ENCODE measurements at regions of chr3 and their contacts with region 1.

Region 1: DNA sequence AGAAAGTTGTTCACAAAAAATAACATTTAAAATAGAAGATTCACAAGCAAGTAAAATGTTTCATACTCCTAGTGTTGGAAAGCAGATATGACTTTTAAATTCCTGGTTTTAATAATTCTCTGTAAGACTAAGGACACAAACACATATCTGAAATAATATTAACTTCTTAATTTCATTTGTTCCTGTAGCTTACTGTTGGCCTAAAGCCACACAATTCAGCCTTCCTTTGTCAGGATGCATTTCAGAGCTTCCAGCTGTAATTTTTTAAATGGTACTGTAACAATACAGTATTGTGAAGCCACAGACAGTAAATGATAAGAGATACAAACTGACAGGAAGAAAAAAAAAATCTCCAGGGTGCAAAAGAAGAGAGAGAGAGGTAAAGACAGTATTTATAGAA is 84.2 kb downstream of the TMCC1 start:
- DNase-seq: no peak
- H3K4me3 ChIP-seq: no peak overlapping the region
- H3K27ac ChIP-seq: 0 out of 2 replicates have a peak overlapping the region, but pooled peaks have one; percentile 19
- H3K4me1 ChIP-seq: no peaks in the 10 kb centered on the region
- H3K27me3 ChIP-seq: no peaks in the 10 kb centered on the region
- CTCF ChIP-seq: no peak

Region 2: GRCh38 chr3:129310111-129311011 is 498.9 kb before region 1 on chr3:
- CTCF ChIA-PET with region 1: interaction called, 18 read pairs
- POLR2A ChIA-PET with region 1: no interaction called
- intact Hi-C with region 1: no loop called
- DNase-seq: peak; percentile 56 to 69
- H3K4me3 ChIP-seq: no peak overlapping the region
- H3K27ac ChIP-seq: no peak overlapping the region
- H3K4me1 ChIP-seq: peaks cover 20% of the 10 kb centered on the region
- H3K27me3 ChIP-seq: no peaks in the 10 kb centered on the region
- CTCF ChIP-seq: no peak

Region 3: GRCh38 chr3:129432036-129432435 is 377.3 kb before region 1 on chr3:
- CTCF ChIA-PET with region 1: no interaction called
- POLR2A ChIA-PET with region 1: interaction called, 14 read pairs
- intact Hi-C with region 1: no loop called
- DNase-seq: no peak
- H3K4me3 ChIP-seq: no peak overlapping the region
- H3K27ac ChIP-seq: no peak overlapping the region
- H3K4me1 ChIP-seq: 0 out of 2 replicates have a peak, but pooled peaks cover 10% of the 10 kb centered on the region
- H3K27me3 ChIP-seq: no peaks in the 10 kb centered on the region
- CTCF ChIP-seq: no peak

Region 4: DNA sequence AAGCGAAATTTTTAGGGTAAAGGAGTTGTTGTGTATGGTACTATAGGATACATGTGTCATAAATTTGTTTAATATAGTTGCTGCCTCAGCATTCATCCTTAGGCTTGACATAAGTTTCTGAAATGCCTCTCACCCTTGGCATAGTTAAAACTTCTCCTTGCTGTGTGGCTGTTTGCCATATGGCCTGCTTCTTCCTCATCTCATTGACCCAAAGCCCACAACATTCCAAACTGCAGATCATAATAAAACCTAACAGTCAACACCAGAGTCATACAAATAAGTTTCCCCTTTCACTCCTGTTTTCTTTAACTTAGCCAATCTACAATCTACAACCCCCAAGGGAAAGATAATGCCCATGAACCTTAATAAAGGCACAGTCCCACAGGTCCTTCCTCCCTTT is 52.4 kb before region 1 on chr3:
- CTCF ChIA-PET with region 1: no interaction called
- POLR2A ChIA-PET with region 1: no interaction called
- intact Hi-C with region 1: no loop called
- DNase-seq: peak in 1 of 2 experiments; percentile 58
- H3K4me3 ChIP-seq: no peak overlapping the region
- H3K27ac ChIP-seq: peak overlapping the region; percentile 44; the same call in 1 of the 2 replicates
- H3K4me1 ChIP-seq: peaks cover 15% of the 10 kb centered on the region
- H3K27me3 ChIP-seq: no peaks in the 10 kb centered on the region
- CTCF ChIP-seq: no peak

Region 5: GRCh38 chr3:129768728-129769127 is 40.6 kb before region 1 on chr3:
- CTCF ChIA-PET with region 1: interaction called, 11 read pairs
- POLR2A ChIA-PET with region 1: no interaction called
- intact Hi-C with region 1: no loop called
- DNase-seq: no peak
- H3K4me3 ChIP-seq: no peak overlapping the region
- H3K27ac ChIP-seq: 0 out of 2 replicates have a peak overlapping the region, but pooled peaks have one; percentile 8
- H3K4me1 ChIP-seq: no peaks in the 10 kb centered on the region
- H3K27me3 ChIP-seq: no peaks in the 10 kb centered on the region
- CTCF ChIP-seq: no peak

Region 6: DNA sequence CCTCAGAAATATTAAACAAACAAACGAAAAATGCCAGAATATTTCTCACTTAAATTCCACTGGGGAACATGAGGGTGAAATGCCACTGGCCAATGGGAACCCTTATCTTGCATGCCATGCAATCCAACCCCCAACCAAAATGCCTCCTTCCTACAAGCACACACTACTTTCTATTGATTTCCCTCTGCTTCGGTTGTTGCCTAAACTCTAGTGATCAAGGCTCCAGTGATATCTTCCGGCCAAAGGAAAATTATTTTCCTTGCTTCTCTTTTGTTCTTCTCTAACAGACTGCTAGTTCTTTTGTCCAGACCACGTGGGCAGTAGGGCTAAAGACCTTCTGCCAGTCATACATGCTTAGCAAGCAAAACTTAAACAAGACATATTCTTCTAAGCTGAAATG is 31.5 kb before region 1 on chr3:
- CTCF ChIA-PET with region 1: no interaction called
- POLR2A ChIA-PET with region 1: interaction called, 11 read pairs
- intact Hi-C with region 1: no loop called
- DNase-seq: no peak
- H3K4me3 ChIP-seq: no peak overlapping the region
- H3K27ac ChIP-seq: no peak overlapping the region
- H3K4me1 ChIP-seq: no peaks in the 10 kb centered on the region
- H3K27me3 ChIP-seq: no peaks in the 10 kb centered on the region
- CTCF ChIP-seq: no peak

Region 7: GRCh38 chr3:129794311-129795185 is 14.7 kb before region 1 on chr3:
- CTCF ChIA-PET with region 1: interaction called, 35 read pairs
- POLR2A ChIA-PET with region 1: interaction called, 4 read pairs
- intact Hi-C with region 1: no loop called
- DNase-seq: peak; percentile 93 to 99
- H3K4me3 ChIP-seq: peak overlapping the region; percentile 96
- H3K27ac ChIP-seq: peak overlapping the region; percentile 100
- H3K4me1 ChIP-seq: peaks cover 45% of the 10 kb centered on the region
- H3K27me3 ChIP-seq: no peaks in the 10 kb centered on the region
- CTCF ChIP-seq: no peak